ENCODE measurements at regions of chr2 and their contacts with region 1.

Region 1: DNA sequence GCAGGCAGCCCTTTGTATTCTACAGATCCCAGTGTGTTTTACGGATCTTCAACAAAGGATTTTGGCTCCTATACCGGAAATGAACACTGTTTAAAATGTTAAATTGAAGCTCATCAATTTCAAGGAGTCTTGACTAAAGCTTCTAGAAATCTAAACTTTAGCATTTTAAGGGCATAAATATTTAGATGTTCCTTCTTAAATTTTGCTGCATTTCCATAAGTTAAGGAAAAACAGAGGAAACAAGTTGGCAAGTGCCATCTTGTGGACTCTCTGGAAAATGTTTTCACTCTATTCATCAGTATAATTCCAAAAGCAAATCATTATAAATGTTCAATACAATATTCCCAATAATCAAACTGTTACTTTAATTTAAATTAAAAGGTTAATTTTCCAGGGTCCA is 19.6 kb downstream of the CHN1 start:
- DNase-seq: peak; percentile 45
- H3K4me3 Mint-ChIP-seq: no peak overlapping the region
- H3K27ac Mint-ChIP-seq: no peak overlapping the region
- H3K4me1 Mint-ChIP-seq: peaks cover 5% of the 10 kb centered on the region
- H3K27me3 Mint-ChIP-seq: no peaks in the 10 kb centered on the region
- CTCF ChIP-seq: peak; percentile 58

Region 2: DNA sequence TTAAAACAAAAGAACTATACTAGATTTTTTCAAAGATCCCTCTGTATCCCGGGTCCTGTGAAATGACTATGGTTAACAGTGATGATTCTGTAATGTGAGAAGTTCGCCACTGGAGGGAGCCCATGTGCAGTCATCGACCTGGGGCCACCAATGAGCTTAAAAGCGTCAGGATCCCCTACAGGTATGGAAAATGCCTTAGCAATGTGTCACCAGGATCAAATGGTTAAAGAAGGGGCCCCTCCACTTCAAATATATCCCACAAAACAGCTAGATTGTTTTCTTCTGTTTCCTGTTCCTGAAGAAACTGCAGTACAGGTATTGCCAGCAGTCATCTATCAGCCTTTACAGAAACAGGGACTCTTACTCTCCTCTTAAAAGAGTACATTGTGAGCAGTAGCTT is 236.7 kb before region 1 on chr2:
- CTCF ChIA-PET with region 1: interaction called, 24 read pairs
- POLR2A ChIA-PET with region 1: interaction called, 3 read pairs
- intact Hi-C with region 1: loop called (anchors 1 kb)
- DNase-seq: peak; percentile 81
- H3K4me3 Mint-ChIP-seq: no peak overlapping the region
- H3K27ac Mint-ChIP-seq: no peak overlapping the region
- H3K4me1 Mint-ChIP-seq: peaks cover 5% of the 10 kb centered on the region
- H3K27me3 Mint-ChIP-seq: no peaks in the 10 kb centered on the region
- CTCF ChIP-seq: peak; percentile 67

Region 3: DNA sequence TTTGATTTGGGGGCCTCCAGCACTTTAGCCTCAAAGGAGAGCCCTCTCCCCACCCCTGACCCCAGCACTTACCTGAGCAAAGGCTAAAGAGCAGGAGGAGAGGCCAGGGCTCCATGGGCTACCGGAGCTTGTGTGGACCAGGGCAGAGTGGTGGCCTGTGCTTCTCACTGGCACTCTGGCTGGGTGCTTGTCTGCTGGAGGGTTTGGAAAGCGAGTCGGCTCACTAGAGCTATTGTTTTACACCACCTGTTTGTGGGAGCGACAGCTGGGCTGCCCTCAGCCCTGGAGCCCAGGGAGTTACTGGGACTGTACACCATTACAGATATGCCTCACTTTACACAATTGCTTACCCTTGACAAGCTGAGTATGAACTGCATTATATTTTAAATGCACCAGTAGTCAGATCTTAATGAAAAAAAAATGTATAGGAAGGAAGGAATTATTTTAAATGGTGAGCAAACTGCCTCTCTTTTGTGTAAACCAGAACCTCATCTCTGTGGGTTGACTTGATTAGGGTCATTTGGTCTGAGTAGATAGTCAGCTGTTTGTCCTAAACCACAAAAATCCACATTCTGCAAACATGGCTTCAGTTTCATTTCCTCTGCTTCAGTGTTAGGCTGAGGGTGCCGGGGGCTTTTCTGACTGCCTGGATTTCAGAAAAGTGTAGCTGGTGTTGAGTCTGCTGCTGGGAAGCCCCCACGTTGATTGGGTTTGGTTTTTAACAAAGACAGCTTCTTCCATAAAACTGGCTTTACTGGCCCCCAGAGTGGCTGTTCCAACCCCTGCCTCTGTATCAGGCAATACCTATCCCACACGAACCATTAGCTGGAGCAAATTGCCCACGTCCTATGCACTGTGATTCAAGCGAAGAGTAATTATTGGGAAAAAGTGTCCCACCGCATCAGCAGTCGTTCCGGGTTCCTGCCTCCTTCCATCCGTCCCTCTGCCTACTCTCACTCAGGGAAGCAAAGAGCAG is 221.1 kb before region 1 on chr2 and contains the start of gene CHRNA1:
- CTCF ChIA-PET with region 1: interaction called, 259 read pairs
- POLR2A ChIA-PET with region 1: interaction called, 3 read pairs
- intact Hi-C with region 1: no loop called
- DNase-seq: no peak
- H3K4me3 Mint-ChIP-seq: no peak within 1 kb of the TSS
- H3K27ac Mint-ChIP-seq: no peak within 1 kb of the TSS
- H3K4me1 Mint-ChIP-seq: no peaks in the 10 kb centered on the region
- H3K27me3 Mint-ChIP-seq: no peaks in the 10 kb centered on the region
- CTCF ChIP-seq: no peak
- total RNA-seq, gene CHRNA1: not detected in 2 replicates

Region 4: DNA sequence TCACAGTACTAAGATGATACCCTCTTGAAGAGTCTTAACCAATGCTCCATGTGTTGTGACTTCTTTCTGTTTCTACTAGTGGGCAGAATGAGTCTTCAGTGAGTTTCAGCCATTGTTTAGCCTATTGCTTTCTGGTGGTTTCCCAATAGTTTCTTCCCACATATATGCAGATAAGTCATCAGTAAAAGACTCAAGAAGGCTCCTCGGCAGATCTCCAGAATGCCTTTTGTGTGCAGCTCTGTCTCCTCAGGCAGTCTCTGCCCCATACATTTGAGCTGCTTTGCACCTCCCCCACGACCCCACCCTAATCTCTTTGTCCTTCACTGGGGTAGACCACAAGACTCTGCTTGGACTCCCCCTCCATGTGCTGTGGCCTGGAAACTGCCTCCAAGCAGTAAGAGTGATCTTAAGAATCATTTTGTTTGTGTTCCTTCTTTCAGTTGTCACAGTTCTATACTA is 149.8 kb before region 1 on chr2:
- CTCF ChIA-PET with region 1: interaction called, 17 read pairs
- POLR2A ChIA-PET with region 1: interaction called, 3 read pairs
- intact Hi-C with region 1: no loop called
- DNase-seq: peak; percentile 96
- H3K4me3 Mint-ChIP-seq: peak overlapping the region; percentile 56
- H3K27ac Mint-ChIP-seq: peak overlapping the region; percentile 99
- H3K4me1 Mint-ChIP-seq: peaks cover 66% of the 10 kb centered on the region
- H3K27me3 Mint-ChIP-seq: no peaks in the 10 kb centered on the region
- CTCF ChIP-seq: no peak

Region 5: DNA sequence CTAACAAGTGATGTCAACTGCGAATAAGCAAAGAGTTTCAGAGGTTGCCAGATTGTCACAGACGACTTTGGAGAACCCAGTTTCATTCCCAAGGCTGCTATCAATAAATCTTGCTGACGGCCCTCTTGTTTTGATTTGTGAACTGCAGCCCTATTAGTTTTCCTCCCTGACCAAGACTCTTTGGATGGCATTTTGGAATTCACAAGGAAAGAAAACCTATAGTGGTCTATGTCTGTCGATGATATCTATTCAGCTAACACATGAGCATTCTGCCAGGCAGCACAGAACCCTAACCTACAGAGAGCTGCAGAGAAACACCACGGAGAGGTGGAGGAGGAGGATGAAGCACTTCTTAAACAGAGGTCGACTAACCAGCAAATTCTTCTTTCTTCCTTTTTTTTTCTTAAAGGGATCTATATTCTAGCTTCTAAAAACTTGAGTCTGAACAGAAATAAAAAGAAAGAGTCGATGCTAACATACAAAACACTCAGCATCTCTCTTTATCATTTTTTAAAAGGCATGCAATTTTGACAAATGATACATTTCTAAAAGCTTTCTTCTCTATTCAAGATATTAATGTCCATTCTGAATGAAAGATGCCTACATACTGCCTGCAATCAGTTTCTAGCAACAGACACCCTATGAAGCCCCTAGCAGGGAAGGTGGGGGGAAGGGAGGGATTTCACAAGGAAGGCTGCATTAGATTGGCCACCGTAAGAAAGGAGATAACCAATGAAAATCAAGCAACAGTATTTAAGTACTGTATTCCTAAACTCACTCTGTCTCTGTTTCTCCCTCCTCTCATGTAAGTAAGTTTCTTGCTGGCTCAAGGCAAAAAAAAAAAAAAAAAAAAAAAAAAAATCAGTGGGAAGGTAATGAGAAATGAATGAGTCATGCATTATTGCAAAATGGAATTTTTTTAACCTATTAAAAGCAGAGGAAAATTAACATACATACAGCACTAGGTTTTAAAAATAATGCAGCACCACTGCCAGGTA is 138.4 kb before region 1 on chr2:
- CTCF ChIA-PET with region 1: interaction called, 6 read pairs
- POLR2A ChIA-PET with region 1: interaction called, 4 read pairs
- intact Hi-C with region 1: loop called (anchors 1 kb)
- DNase-seq: peak; percentile 91
- H3K4me3 Mint-ChIP-seq: peak overlapping the region; percentile 76
- H3K27ac Mint-ChIP-seq: peak overlapping the region; percentile 78
- H3K4me1 Mint-ChIP-seq: peaks cover 33% of the 10 kb centered on the region
- H3K27me3 Mint-ChIP-seq: no peaks in the 10 kb centered on the region
- CTCF ChIP-seq: no peak